ENCODE measurements at regions of chr17 and their contacts with region 1.

Region 1: DNA sequence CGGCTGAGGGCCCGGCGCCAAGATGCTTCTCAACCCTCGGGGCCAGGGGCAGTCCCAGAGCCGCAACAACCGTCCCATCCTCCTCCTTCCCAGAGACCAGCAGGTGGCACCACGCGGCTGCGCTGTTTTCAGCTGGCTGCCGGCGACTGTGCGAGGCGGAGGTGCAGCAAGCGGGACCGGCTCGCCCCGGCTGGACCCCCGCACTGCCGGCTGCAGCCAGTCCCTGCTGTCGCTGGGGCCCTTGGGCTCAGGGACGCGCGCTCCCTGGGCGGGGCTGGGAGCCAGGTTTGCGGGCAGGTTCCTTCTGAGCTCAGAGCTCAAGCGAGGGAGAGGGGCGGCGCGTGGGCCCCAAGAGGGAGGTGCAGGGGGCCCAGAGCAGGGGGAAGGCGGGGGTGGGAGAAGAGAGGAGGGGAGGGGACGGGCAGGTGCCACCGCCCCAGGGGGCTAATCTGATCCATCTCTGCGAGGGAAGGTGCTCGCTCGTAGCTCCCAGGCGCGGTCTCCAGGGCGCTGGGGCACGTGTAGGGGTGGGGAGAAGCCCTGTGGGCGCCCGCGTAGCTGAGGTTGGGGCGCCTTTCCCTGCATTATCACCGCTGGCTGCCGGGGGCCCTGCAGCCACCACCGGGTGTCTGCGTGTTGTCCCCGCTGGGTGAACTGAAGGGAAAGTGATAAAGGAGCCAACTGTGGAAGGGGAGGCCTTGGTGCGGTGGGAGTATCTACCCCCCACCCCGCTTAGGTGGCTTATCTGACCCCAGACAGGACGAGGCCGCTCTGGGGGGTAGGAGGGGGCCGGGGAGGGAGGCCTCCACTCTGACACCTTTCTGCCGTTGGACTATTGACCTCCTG is 24.2 kb downstream of the STAT5A start:
- DNase-seq: peak; percentile 79
- H3K4me3 ChIP-seq: no peak overlapping the region
- H3K27ac ChIP-seq: peak overlapping the region; percentile 71
- H3K4me1 ChIP-seq: peaks cover 4% of the 10 kb centered on the region
- H3K27me3 ChIP-seq: no peaks in the 10 kb centered on the region
- CTCF ChIP-seq: peak; percentile 25

Region 2: GRCh38 chr17:41377546-41377945 is 935.0 kb before region 1 on chr17:
- intact Hi-C with region 1: no loop called
- DNase-seq: no peak
- H3K4me3 ChIP-seq: no peak overlapping the region
- H3K27ac ChIP-seq: no peak overlapping the region
- H3K4me1 ChIP-seq: no peaks in the 10 kb centered on the region
- H3K27me3 ChIP-seq: no peaks in the 10 kb centered on the region
- CTCF ChIP-seq: no peak

Region 3: GRCh38 chr17:42221937-42222745 is 90.4 kb before region 1 on chr17:
- intact Hi-C with region 1: loop called (anchors 10 kb)
- DNase-seq: no peak
- H3K4me3 ChIP-seq: no peak overlapping the region
- H3K27ac ChIP-seq: no peak overlapping the region
- H3K4me1 ChIP-seq: no peaks in the 10 kb centered on the region
- H3K27me3 ChIP-seq: no peaks in the 10 kb centered on the region
- CTCF ChIP-seq: peak; percentile 43